AG04450 (cell line): ENCODE measurements at regions of chr4 and their contacts with region 1.

Region 1: GRCh38 chr4:173420324-173420752 is 21.4 kb upstream of the SCRG1 start:
- DNase-seq: no peak
- H3K4me3 ChIP-seq: no peak overlapping the region
- H3K27ac ChIP-seq: no peak overlapping the region
- H3K27me3 ChIP-seq: no peaks in the 10 kb centered on the region
- CTCF ChIP-seq: peak; percentile 50

Region 2: GRCh38 chr4:173301518-173302201 is 118.7 kb before region 1 on chr4:
- CTCF ChIA-PET with region 1: interaction called, 10 read pairs
- POLR2A ChIA-PET with region 1: no interaction called
- DNase-seq: peak; percentile 16
- H3K4me3 ChIP-seq: no peak overlapping the region
- H3K27ac ChIP-seq: no peak overlapping the region
- H3K27me3 ChIP-seq: no peaks in the 10 kb centered on the region
- CTCF ChIP-seq: peak; percentile 74

Region 3: DNA sequence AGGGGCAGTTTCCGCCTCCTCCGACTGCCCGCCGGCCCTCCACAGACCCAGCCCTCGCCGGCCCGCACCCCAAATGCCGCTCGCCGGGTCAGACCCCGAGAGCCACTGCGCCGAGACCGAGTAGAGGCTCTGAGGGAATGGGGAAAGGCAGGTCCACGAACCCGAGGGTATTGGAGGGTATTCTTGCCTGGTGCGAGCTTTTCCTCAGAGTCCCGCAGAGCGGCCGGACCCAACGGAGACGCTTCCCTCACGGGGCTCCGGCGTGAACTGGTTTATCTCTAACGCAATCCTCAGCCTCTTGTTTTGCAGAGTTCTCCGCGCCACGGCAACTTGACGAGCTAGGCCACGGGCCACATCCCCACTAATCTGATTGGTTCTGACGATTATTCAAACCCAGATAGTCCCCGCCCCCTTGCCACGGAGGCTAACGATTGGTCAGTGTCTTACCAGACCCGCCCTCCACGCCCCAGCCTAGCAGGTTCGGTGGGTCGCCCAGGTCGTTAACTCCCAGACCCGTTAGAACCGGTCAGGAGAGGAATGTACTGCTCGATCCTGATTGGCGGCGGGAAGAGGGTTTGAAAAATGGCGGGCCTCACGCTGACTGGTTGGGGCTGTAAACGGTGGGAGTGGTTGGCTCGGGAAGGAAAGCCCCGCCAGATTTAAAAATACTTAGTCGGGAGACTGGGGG is 86.1 kb before region 1 on chr4 and contains the start of gene HMGB2:
- CTCF ChIA-PET with region 1: interaction called, 9 read pairs
- POLR2A ChIA-PET with region 1: interaction called, 13 read pairs
- DNase-seq: peak; percentile 100
- H3K4me3 ChIP-seq: peak within 1 kb of the TSS; percentile 90
- H3K27ac ChIP-seq: peak within 1 kb of the TSS; percentile 98
- H3K27me3 ChIP-seq: no peaks in the 10 kb centered on the region
- CTCF ChIP-seq: no peak
- polyA plus RNA-seq, gene HMGB2: 57.7 and 89.8 TPM in 2 replicates

Region 4: DNA sequence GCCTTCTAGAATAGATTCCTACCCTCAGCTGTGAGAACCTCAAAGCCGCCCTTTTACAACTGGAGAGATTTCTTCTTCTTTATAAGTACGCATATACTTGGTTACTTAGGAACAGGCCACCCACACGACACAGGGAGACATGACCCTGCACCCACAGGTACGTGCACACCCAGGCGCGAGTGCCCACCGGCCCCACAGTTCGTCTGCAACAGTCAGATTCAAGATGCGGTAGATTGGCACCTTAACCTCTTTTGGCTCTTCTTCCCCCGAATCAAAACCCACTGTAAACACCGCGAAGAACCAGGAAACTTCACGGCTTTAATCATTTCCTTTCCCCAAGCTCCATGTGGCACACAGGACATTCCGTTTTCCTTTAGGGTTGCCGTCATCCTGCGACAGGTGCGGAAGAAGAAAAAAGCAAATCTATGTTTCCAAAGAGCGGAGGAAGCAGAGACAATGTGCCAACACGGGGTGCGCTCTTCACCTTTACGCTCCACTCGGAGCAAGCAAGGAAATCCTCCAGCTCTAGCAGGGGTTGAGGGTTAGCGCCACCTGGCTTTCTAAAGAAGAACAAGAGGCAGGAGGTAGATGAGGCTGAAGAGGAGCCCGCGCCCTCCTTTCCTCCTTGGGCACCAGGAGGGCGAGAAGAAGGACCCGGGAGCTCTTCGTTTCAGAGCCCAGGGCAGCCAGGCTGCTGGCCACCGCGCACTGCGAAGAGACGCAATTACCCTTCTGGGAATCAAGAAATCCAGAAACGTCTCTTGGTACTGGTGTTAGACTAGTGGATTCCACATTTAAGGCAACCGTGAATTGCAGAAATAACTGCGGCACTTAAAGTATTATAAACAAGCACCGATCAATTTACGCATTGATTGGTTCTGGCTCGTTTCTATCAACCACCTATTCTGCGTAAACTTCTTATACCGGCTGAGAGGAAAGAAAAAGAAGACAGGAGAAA is 74.0 kb after region 1 on chr4:
- CTCF ChIA-PET with region 1: interaction called, 84 read pairs
- POLR2A ChIA-PET with region 1: interaction called, 4 read pairs
- DNase-seq: peak; percentile 41
- H3K4me3 ChIP-seq: peak overlapping the region; percentile 52
- H3K27ac ChIP-seq: no peak overlapping the region
- H3K27me3 ChIP-seq: peaks cover 20% of the 10 kb centered on the region
- CTCF ChIP-seq: peak; percentile 88

Region 5: DNA sequence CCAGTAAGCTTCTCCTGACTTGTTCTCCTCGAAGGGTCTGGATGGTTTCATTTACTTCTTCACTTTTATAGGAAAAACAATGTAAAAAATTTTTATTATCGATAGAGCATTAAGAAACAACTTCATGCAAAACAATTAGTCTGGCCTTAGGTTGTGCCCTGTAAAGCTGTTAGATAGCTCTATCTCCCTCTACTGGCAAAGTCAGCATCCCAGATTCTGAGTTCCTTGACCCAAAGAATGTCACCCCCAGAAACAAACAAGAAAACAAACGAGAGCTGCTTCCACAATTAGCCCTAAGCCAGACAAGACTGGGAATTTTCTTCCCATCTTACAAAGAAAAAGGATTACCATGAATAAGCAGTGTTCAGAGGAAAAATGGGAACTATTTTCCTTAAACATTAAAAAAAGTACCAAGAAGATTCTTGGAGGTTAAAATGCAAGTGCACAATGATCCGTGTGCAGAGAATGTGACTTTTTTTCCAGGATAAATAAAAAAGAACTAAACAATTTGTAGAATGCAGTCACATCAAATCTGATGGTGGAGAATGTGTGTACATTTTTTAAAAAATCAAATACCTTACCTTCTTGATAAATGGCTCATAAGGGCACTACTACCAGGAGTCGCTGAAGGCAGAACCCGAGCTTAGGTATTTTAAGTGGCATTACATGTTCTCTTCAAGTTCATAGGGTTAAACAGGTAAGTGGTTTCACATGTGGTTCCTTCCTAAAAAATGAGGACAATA is 570.0 kb after region 1 on chr4:
- CTCF ChIA-PET with region 1: interaction called, 30 read pairs
- POLR2A ChIA-PET with region 1: no interaction called
- DNase-seq: no peak
- H3K4me3 ChIP-seq: no peak overlapping the region
- H3K27ac ChIP-seq: no peak overlapping the region
- H3K27me3 ChIP-seq: no peaks in the 10 kb centered on the region
- CTCF ChIP-seq: peak; percentile 80

Region 6: DNA sequence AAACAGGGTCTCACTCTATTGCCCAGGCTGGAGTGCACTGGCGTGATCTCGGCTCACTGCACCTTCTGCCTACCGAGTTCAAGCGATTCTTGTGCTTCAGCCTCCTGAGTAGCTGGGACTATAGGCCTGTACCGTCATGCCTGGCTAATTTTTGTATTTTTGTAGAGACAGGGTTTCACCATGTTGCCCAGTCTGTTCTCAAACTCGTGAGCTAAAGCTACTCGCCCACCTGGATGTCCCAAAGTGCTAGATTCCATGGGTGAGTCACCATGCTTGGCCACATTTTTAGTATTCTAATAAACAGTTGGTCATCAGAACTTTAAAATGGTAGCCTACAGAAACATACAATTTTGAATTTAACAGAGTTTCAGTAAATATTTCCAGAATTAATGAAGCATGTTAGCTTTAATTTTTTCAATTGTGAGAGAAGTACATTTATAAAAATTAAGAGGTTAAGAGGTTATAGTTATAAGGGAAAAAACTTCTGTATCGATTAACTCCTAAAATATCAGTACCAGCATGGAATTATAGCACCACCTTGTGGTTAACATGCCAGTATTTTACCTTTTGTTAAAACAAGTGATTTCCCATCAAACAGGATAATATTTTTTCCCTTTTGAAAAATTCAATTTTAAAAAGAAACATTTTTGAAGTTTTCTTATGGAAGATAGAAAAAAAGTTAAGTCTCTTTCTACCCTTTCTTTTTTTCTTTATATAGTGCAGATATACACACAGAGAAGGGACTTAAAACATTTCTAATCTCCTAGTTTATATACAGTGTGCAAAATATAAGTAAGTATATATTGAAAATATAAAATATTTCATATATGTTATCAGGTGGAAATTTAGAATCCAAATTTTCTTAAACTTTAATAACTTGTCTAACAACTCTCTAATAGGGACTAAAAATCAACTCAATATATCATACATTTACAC is 898.8 kb after region 1 on chr4:
- CTCF ChIA-PET with region 1: interaction called, 14 read pairs
- POLR2A ChIA-PET with region 1: no interaction called
- DNase-seq: no peak
- H3K4me3 ChIP-seq: no peak overlapping the region
- H3K27ac ChIP-seq: no peak overlapping the region
- H3K27me3 ChIP-seq: no peaks in the 10 kb centered on the region
- CTCF ChIP-seq: peak; percentile 74